Breast epithelium (tissue), 4 donors: ENCODE measurements at regions of chr7 and their contacts with region 1.

Region 1: GRCh38 chr7:159000859-159001435 is 143.7 kb downstream of the VIPR2 start:
- DNase-seq: no peak
- H3K4me3 ChIP-seq: no peak overlapping the region
- H3K27ac ChIP-seq: no peak overlapping the region
- H3K4me1 ChIP-seq: no peaks in the 10 kb centered on the region
- H3K27me3 ChIP-seq: peaks cover 0 to 11% of the 10 kb centered on the region in 2 donors
- CTCF ChIP-seq: no peak
- POLR2A ChIP-seq: no peak

Region 2: DNA sequence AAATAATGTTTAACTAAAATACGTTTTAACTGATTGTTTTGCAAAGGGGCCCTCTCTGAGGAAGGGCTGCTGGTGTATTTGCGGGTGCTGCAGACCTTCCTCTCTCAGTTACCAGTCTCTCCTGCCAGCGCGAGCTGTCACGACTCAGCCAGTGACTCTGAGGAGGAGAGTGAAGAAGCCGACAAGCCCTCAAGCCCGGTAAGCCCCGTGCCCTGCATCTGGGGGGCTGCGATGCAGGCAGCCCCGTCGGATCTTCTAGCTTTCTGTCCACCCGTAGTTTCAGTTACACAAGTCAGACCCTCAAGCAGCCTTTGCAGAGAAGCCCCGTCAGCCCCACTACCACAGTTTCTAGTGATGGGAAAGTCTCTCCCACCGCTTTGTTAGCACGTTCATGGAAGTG is 1817.1 kb before region 1 on chr7:
- intact Hi-C with region 1: loop called (anchors 5 kb)
- DNase-seq: no peak
- H3K4me3 ChIP-seq: no peak overlapping the region
- H3K27ac ChIP-seq: no peak overlapping the region
- H3K4me1 ChIP-seq: no peaks in the 10 kb centered on the region
- H3K27me3 ChIP-seq: no peaks in the 10 kb centered on the region
- CTCF ChIP-seq: no peak
- POLR2A ChIP-seq: no peak